IMR-90 (cell line): ENCODE measurements at regions of chr20 and their contacts with region 1.

Region 1: DNA sequence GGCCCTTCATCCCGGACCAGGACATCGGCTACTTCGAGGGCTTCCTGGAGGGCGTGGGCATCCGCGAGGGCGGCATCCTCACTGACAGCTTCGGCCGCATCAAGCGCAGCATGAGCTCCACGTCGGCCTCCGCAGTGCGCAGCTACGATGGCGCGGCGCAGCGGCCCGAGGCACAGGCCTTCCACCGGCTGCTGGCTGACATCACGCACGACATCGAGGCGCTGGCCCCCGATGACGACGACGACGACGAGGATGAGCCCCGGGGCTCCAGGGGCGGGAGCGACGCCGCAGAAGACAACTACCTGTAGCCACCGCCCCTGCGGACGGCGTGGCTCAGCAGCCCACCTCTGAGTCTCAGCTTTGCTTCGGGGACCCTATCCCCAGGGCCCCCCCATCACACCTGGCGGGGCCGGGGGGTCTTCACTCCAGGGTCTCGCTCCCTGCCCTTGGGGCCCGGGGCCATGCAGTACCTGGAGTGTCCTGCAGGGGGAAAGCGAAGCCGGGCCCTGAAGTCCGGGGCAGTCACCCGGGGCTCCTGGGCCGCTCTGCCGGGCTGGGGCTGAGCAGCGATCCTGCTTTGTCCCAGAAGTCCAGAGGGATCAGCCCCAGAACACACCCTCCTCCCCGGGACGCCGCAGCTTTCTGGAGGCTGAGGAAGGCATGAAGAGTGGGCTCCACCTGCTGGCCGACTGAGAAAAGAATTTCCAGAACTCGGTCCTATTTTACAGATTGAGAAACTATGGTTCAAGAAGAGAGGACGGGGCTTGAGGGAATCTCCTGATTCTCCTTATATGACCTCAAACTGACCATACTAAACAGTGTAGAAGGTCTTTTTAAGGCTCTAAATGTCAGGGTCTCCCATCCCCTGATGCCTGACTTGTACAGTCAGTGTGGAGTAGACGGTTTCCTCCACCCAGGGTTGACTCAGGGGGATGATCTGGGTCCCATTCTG is 20.8 kb upstream of the HCK start:
- DNase-seq: peak; percentile 73
- ATAC-seq: peak; percentile 98
- H3K4me3 ChIP-seq: no peak overlapping the region
- H3K27ac ChIP-seq: no peak overlapping the region
- H3K4me1 ChIP-seq: no peaks in the 10 kb centered on the region
- H3K27me3 ChIP-seq: peaks cover 75% of the 10 kb centered on the region
- CTCF ChIP-seq: peak; percentile 73
- POLR2A ChIP-seq: no peak
- RAD21 ChIP-seq: peak; percentile 71

Region 2: GRCh38 chr20:31849455-31849925 is 181.8 kb before region 1 on chr20:
- CTCF ChIA-PET with region 1: interaction called, 5 read pairs
- POLR2A ChIA-PET with region 1: no interaction called
- dilution Hi-C with region 1: no loop called
- in situ Hi-C with region 1: no loop called
- intact Hi-C with region 1: loop called (anchors 1 kb)
- DNase-seq: no peak
- ATAC-seq: no peak
- H3K4me3 ChIP-seq: no peak overlapping the region
- H3K27ac ChIP-seq: no peak overlapping the region
- H3K4me1 ChIP-seq: no peaks in the 10 kb centered on the region
- H3K27me3 ChIP-seq: peaks cover 60% of the 10 kb centered on the region
- CTCF ChIP-seq: no peak
- POLR2A ChIP-seq: no peak
- RAD21 ChIP-seq: no peak

Region 3: GRCh38 chr20:32069711-32070110 is 38.4 kb after region 1 on chr20:
- CTCF ChIA-PET with region 1: interaction called, 3 read pairs
- POLR2A ChIA-PET with region 1: no interaction called
- dilution Hi-C with region 1: no loop called
- in situ Hi-C with region 1: no loop called
- intact Hi-C with region 1: loop called (anchors 2 kb)
- DNase-seq: peak; percentile 69
- ATAC-seq: peak; percentile 25
- H3K4me3 ChIP-seq: no peak overlapping the region
- H3K27ac ChIP-seq: no peak overlapping the region
- H3K4me1 ChIP-seq: peaks cover 10% of the 10 kb centered on the region
- H3K27me3 ChIP-seq: peaks cover 10% of the 10 kb centered on the region
- CTCF ChIP-seq: no peak
- POLR2A ChIP-seq: no peak
- RAD21 ChIP-seq: no peak

Region 4: DNA sequence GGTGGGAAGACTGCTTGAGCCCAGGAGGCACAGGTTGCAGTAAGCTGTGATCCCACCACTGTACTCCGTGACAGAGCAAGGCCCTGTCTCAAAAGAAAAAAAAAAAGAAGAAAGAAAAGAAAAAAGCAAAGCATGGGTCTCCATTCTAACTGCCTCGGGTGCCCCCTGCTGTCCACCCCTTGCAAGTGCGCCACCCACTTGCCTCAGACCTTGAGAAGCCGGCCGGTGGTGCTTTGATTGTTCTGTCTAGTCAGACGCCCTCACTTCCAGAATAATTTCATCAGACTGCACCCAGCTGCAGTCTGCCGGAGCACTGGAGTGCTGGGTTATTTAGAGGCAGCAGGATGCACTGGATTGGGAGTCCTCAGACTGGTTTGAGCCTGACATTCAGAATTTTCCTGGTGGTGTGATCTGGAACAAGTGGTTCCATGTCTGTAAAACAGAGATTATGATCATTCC is 60.6 kb after region 1 on chr20:
- CTCF ChIA-PET with region 1: interaction called, 6 read pairs
- POLR2A ChIA-PET with region 1: no interaction called
- dilution Hi-C with region 1: no loop called
- in situ Hi-C with region 1: no loop called
- intact Hi-C with region 1: loop called (anchors 1 kb)
- DNase-seq: peak; percentile 72
- ATAC-seq: peak; percentile 99
- H3K4me3 ChIP-seq: no peak overlapping the region
- H3K27ac ChIP-seq: no peak overlapping the region
- H3K4me1 ChIP-seq: no peaks in the 10 kb centered on the region; the same call in 1 of the 2 replicates
- H3K27me3 ChIP-seq: peaks cover 43% of the 10 kb centered on the region
- CTCF ChIP-seq: peak; percentile 94
- POLR2A ChIP-seq: no peak
- RAD21 ChIP-seq: peak; percentile 91